Testis (tissue), 5 donors: ENCODE measurements at regions of chr1 and their contacts with region 1.

Region 1: GRCh38 chr1:203504397-203505250 is 10.7 kb downstream of the OPTC start:
- DNase-seq: peak; percentile 94
- H3K4me3 ChIP-seq: no peak overlapping the region
- H3K27ac ChIP-seq: no peak overlapping the region
- H3K4me1 ChIP-seq: peaks cover 22% of the 10 kb centered on the region
- H3K27me3 ChIP-seq: no peaks in the 10 kb centered on the region
- CTCF ChIP-seq: peak; percentile 87 to 92 (median 87)
- POLR2A ChIP-seq: no peak

Region 2: GRCh38 chr1:203244776-203245175 is 259.8 kb before region 1 on chr1:
- intact Hi-C with region 1: no loop called
- DNase-seq: no peak
- H3K4me3 ChIP-seq: no peak overlapping the region
- H3K27ac ChIP-seq: no peak overlapping the region
- H3K4me1 ChIP-seq: no peaks in the 10 kb centered on the region
- H3K27me3 ChIP-seq: no peaks in the 10 kb centered on the region
- CTCF ChIP-seq: no peak
- POLR2A ChIP-seq: no peak

Region 3: GRCh38 chr1:203454986-203455471 is 49.6 kb before region 1 on chr1:
- intact Hi-C with region 1: no loop called
- DNase-seq: no peak
- H3K4me3 ChIP-seq: no peak overlapping the region
- H3K27ac ChIP-seq: no peak overlapping the region
- H3K4me1 ChIP-seq: peaks cover 4% of the 10 kb centered on the region
- H3K27me3 ChIP-seq: no peaks in the 10 kb centered on the region
- CTCF ChIP-seq: no peak
- POLR2A ChIP-seq: no peak

Region 4: GRCh38 chr1:203625628-203626019 is 121.0 kb after region 1 on chr1:
- intact Hi-C with region 1: loop called (anchors 10 kb)
- DNase-seq: peak; percentile 54
- H3K4me3 ChIP-seq: no peak overlapping the region
- H3K27ac ChIP-seq: peak overlapping the region in 1 of 2 donors; percentile 73
- H3K4me1 ChIP-seq: peaks cover 26% of the 10 kb centered on the region
- H3K27me3 ChIP-seq: no peaks in the 10 kb centered on the region
- CTCF ChIP-seq: peak in 1 of 3 experiments; percentile 32
- POLR2A ChIP-seq: no peak

Region 5: DNA sequence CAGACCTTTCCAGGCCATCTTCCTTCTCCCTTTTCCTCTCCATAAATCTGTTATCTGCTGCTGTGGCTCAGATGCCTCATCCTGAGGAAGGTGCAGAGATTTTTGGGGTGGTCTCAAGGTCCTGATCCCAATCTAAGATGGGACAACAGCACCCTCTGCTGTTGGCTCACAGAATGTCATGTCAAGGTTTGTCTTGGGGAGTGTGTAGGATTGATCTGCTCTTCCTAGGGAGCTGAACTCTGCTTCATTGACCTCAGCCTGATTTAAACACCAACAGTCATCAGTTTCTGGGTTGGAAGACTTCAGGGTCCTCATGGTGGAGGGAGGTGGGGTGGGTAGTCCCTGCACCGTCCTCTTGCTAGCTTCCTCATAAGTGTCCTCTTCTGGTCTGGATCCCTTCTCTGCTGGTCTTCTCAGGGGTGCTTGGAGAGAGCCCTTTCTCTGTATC is 197.5 kb after region 1 on chr1:
- intact Hi-C with region 1: loop called (anchors 5 kb)
- DNase-seq: peak; percentile 70
- H3K4me3 ChIP-seq: no peak overlapping the region
- H3K27ac ChIP-seq: no peak overlapping the region
- H3K4me1 ChIP-seq: peaks cover 4% of the 10 kb centered on the region
- H3K27me3 ChIP-seq: no peaks in the 10 kb centered on the region
- CTCF ChIP-seq: peak; percentile 72 to 91 (median 88)
- POLR2A ChIP-seq: no peak